Astrocyte of the cerebellum (primary cell): ENCODE measurements at regions of chr17 and their contacts with region 1.

Region 1: DNA sequence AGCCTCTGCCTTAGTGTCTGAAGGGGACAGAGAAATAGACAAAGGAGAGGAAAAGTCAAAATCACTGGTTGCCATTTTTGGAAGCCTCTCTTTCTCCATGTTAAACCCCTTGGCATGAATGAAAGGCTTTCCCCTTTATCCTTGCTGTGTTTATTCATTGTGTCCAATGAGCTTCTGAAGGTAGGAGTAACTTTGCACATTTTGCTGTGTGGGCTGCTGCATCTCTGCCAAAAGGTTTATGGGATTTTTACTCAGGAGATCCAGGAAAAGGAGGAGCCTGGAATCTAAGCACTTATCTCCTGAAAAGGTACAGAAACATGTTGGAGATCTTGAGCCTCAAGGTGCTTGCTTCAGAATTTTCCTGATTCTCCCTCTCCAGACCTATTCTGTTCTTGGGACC is 3.9 kb downstream of the CNTROB start:
- DNase-seq: no peak
- H3K4me3 ChIP-seq: no peak overlapping the region
- CTCF ChIP-seq: no peak

Region 2: DNA sequence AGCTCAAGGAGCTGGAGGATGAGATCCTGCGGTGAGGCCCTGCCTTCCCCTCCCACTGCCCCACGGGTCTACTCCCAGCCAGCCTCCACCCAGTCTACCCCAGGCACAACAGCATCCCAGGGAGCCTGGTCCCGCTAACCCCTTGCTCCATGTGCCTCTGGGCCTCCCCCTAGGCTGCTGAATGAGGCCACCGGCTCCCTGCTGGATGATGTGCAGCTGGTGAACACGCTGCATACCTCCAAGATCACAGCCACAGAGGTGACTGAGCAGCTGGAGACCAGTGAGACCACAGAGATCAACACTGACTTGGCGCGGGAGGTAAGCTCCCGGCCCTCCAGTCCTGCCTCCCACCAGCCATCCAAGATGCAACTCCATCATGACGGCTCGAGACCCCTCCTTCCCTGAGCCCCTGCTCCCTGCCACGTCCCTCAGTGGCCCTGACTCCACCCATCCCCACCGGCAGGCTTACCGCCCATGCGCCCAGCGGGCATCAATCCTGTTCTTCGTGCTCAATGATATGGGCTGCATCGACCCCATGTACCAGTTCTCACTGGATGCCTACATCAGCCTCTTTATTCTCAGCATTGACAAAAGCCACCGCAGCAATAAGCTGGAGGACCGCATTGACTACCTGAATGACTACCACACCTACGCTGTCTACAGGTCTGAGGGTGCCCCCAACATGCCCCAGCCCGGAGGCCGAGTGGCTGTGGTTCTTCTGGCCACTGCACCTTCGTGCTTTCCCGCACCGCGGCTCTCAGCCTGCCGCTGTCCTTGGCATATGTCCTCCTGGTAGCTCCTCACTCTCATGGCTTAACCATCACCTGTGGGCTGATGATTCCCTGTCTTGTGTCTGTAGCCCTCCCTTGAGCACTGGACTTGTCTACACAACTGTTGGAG is 116.9 kb before region 1 on chr17:
- in situ Hi-C with region 1: no loop called
- DNase-seq: no peak
- H3K4me3 ChIP-seq: no peak overlapping the region
- CTCF ChIP-seq: no peak

Region 3: DNA sequence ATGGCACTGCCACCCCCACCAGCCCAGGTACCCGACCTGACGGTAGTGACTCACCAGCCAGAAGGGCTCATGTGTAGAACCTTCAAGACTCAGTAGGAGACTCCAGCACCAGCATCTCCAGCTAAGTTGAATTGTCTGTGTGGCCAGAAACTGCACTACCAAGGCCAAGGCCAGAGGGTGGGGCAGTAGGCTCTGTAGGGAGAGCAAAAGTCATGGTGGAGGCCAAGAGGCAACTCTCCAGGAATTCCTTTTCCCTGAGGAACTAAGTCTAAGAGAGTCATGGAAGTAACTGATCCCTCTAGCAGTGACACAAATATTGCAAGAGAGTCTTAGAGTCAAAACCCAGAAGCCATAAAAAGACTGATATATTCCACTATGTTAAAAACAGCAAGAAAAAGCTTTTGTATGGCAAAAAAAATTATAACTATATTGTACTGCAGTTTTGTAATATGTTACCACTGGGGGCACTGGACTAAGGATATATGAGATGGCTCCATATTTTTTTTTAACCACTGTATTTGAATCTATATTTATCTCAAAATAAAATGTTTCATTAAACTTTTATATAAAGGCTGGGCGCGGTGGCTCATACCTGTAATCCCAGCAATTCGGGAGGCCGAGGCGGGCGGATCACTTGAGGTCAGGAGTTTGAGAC is 36.4 kb after region 1 on chr17:
- in situ Hi-C with region 1: loop called (anchors 5 kb)
- DNase-seq: no peak
- H3K4me3 ChIP-seq: no peak overlapping the region
- CTCF ChIP-seq: peak; percentile 17